BJ (cell line): ENCODE measurements at regions of chr1 and their contacts with region 1.

Region 1: GRCh38 chr1:40338745-40339424 is 21.8 kb upstream of the COL9A2 start:
- DNase-seq: peak; percentile 15
- H3K4me3 ChIP-seq: no peak overlapping the region
- H3K27me3 ChIP-seq: peaks cover 2% of the 10 kb centered on the region
- CTCF ChIP-seq: peak; percentile 99

Region 2: DNA sequence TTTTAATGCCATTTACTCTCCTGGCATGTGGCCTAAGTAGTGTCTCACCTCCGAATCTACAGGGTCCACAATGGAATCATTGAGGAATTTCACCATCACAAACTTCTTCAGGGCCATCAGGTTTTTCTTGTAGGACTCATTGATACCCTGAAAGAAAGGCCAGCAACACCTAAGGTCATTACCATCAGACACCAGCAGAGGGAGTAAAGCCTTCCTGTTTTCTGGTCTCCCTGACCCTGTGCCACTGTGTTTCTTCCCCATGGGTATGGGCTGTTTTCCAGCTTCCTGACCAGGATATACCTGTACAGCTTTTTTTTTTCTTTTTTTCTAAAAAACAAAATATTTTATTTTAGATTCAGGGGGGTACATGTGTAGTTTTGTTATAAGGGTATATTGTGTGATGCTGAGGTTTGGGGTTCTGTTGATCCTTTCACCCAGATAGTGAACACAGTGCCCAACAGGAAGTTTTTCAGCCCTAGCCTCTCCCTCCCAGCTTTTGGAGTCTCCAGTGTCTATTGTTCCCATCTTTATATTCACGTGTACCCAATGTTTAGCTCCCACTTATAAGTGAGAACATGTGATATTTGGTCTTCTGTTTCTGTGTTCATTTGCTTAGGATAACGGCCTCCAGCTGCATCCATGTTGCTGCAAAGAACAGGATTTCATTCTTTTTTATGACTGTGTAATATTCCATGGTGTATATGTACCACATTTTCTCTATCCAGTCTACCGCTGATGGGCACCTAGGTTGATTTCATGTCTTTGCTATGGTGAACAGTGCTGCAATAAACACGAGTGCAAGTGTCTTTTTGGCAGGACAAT is 260.2 kb before region 1 on chr1:
- CTCF ChIA-PET with region 1: interaction called, 73 read pairs
- POLR2A ChIA-PET with region 1: no interaction called
- DNase-seq: no peak
- H3K4me3 ChIP-seq: no peak overlapping the region
- H3K27me3 ChIP-seq: no peaks in the 10 kb centered on the region
- CTCF ChIP-seq: peak; percentile 82

Region 3: GRCh38 chr1:40143891-40144575 is 194.9 kb before region 1 on chr1:
- CTCF ChIA-PET with region 1: interaction called, 116 read pairs
- POLR2A ChIA-PET with region 1: interaction called, 3 read pairs
- DNase-seq: no peak
- H3K4me3 ChIP-seq: no peak overlapping the region
- H3K27me3 ChIP-seq: peaks cover 9% of the 10 kb centered on the region
- CTCF ChIP-seq: peak; percentile 81

Region 4: DNA sequence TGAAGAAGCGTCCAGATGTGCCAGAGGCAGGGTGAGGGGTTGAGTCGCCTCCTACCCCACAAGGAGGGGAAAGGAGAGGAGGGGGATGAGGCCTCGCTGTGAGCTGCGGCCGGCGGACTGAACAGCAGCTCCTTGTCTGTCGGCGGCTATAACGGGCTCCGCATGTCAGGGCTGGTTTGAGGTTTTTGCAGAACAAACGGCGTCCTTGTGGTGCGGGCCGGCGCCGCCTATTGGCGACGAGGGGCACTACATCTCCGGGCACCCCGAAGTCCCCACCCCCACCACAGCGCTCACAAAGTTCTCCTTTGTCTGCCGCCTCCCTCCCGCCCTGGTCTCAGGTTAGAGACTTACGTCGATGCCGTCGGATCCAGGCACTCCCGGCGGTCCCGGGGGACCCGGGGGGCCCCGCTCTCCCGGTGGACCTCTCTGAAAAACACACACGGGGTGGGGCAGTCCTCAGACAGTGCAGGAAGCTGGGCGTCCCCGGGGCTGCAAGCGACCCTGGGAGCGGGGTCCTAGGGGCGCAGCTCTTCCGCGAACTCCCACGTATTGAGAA is 23.6 kb before region 1 on chr1:
- CTCF ChIA-PET with region 1: interaction called, 80 read pairs
- POLR2A ChIA-PET with region 1: interaction called, 4 read pairs
- DNase-seq: peak; percentile 12
- H3K4me3 ChIP-seq: peak overlapping the region; percentile 26
- H3K27me3 ChIP-seq: peaks cover 25% of the 10 kb centered on the region
- CTCF ChIP-seq: peak; percentile 96

Region 5: GRCh38 chr1:40363721-40364120 is 24.8 kb after region 1 on chr1:
- CTCF ChIA-PET with region 1: interaction called, 12 read pairs
- POLR2A ChIA-PET with region 1: no interaction called
- DNase-seq: no peak
- H3K4me3 ChIP-seq: no peak overlapping the region
- H3K27me3 ChIP-seq: peaks cover 3% of the 10 kb centered on the region; the same call in 1 of the 2 replicates
- CTCF ChIP-seq: no peak

Region 6: GRCh38 chr1:40404670-40405462 is 66.0 kb after region 1 on chr1:
- CTCF ChIA-PET with region 1: interaction called, 48 read pairs
- POLR2A ChIA-PET with region 1: no interaction called
- DNase-seq: no peak
- H3K4me3 ChIP-seq: no peak overlapping the region
- H3K27me3 ChIP-seq: no peaks in the 10 kb centered on the region
- CTCF ChIP-seq: peak; percentile 78